HEK293 (cell line): ENCODE measurements at regions of chr9 and their contacts with region 1.

Region 1: DNA sequence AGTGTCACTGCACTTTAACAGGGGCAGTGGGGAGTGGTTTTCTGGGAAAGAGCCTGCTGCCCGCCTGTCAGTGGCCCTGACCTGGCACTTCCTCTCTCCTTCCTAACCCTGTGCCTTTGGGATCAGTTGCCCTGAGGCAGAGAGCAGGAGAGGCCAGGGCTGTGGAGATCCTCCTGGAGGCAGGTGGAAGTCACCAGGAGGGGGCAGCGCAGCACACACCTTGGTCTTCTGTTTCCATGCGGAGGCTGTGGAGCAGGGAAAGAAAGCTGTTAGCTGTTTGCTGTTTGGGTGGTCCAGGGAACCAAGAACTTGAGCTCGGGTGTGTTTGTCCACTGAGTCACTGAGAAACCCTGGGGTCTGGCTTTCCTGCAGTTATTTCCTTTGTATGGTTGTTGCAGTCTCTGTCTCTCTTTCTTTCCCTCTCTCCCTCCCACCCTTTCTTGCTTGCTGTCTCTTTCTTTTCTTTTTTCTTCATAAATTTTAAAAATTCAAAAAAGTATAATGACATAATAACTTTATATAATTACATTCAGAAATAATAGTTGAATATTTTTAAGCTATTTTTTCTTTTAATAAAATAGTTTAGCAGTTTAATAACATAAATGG is 28.1 kb downstream of the NTRK2 start:
- H3K4me3 ChIP-seq: no peak overlapping the region
- H3K27ac ChIP-seq: no peak overlapping the region
- H3K4me1 ChIP-seq: no peaks in the 10 kb centered on the region
- CTCF ChIP-seq: peak; percentile 35; the same call in 1 of the 2 replicates

Region 2: GRCh38 chr9:84652577-84653061 is 45.0 kb before region 1 on chr9:
- CTCF ChIA-PET with region 1: no interaction called
- POLR2A ChIA-PET with region 1: no interaction called
- H3K4me3 ChIP-seq: no peak overlapping the region
- H3K27ac ChIP-seq: no peak overlapping the region
- H3K4me1 ChIP-seq: no peaks in the 10 kb centered on the region
- CTCF ChIP-seq: no peak

Region 3: DNA sequence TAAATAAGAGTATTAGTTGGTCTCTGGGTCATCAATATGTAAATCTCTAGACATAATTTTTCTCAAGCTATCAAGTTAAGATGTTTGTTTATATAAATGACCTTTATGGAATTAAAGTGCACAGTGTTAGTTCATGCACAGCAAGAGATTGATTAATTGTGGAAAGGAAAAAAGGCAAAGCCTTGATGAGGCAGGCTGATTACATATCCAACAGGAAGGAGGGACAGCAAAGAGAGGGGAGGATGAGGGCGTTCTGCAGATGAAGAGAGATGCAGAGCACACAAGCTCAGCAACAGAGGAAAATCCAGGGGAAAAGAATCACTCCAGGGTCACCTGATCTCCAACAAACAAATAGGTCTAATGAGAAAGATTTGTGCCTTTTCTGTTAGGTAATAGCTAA is 11.5 kb before region 1 on chr9:
- CTCF ChIA-PET with region 1: interaction called, 11 read pairs
- POLR2A ChIA-PET with region 1: no interaction called
- H3K4me3 ChIP-seq: no peak overlapping the region
- H3K27ac ChIP-seq: no peak overlapping the region
- H3K4me1 ChIP-seq: no peaks in the 10 kb centered on the region
- CTCF ChIP-seq: no peak

Region 4: GRCh38 chr9:84710701-84711397 is 13.2 kb after region 1 on chr9:
- CTCF ChIA-PET with region 1: interaction called, 14 read pairs
- POLR2A ChIA-PET with region 1: no interaction called
- H3K4me3 ChIP-seq: no peak overlapping the region
- H3K27ac ChIP-seq: no peak overlapping the region
- H3K4me1 ChIP-seq: no peaks in the 10 kb centered on the region
- CTCF ChIP-seq: no peak

Region 5: GRCh38 chr9:84781458-84781857 is 83.8 kb after region 1 on chr9:
- CTCF ChIA-PET with region 1: interaction called, 55 read pairs
- POLR2A ChIA-PET with region 1: no interaction called
- H3K4me3 ChIP-seq: no peak overlapping the region
- H3K27ac ChIP-seq: no peak overlapping the region
- H3K4me1 ChIP-seq: no peaks in the 10 kb centered on the region
- CTCF ChIP-seq: no peak

Region 6: GRCh38 chr9:84851935-84852585 is 154.4 kb after region 1 on chr9:
- CTCF ChIA-PET with region 1: interaction called, 12 read pairs
- POLR2A ChIA-PET with region 1: no interaction called
- H3K4me3 ChIP-seq: no peak overlapping the region
- H3K27ac ChIP-seq: peak overlapping the region; percentile 82
- H3K4me1 ChIP-seq: 0 out of 2 replicates have a peak, but pooled peaks cover 3% of the 10 kb centered on the region
- CTCF ChIP-seq: no peak

Region 7: GRCh38 chr9:85258823-85259370 is 561.3 kb after region 1 on chr9:
- CTCF ChIA-PET with region 1: interaction called, 10 read pairs
- POLR2A ChIA-PET with region 1: no interaction called
- H3K4me3 ChIP-seq: peak overlapping the region; percentile 28
- H3K27ac ChIP-seq: no peak overlapping the region
- H3K4me1 ChIP-seq: no peaks in the 10 kb centered on the region
- CTCF ChIP-seq: peak; percentile 92